Breast epithelium (tissue), 4 donors: ENCODE measurements at regions of chr3 and their contacts with region 1.

Region 1: GRCh38 chr3:2568156-2568555 is 469.5 kb downstream of the CNTN4 start:
- DNase-seq: no peak
- H3K4me3 ChIP-seq: no peak overlapping the region
- H3K27ac ChIP-seq: no peak overlapping the region
- H3K4me1 ChIP-seq: no peaks in the 10 kb centered on the region
- H3K27me3 ChIP-seq: no peaks in the 10 kb centered on the region
- CTCF ChIP-seq: no peak
- POLR2A ChIP-seq: no peak

Region 2: GRCh38 chr3:1355691-1356090 is 1212.5 kb before region 1 on chr3:
- intact Hi-C with region 1: loop called (anchors 5 kb)
- DNase-seq: no peak
- H3K4me3 ChIP-seq: no peak overlapping the region
- H3K27ac ChIP-seq: no peak overlapping the region
- H3K4me1 ChIP-seq: no peaks in the 10 kb centered on the region
- H3K27me3 ChIP-seq: no peaks in the 10 kb centered on the region
- CTCF ChIP-seq: no peak
- POLR2A ChIP-seq: no peak